Aorta (tissue), 5 donors: ENCODE measurements at regions of chr2 and their contacts with region 1.

Region 1: GRCh38 chr2:110755491-110756078 is 23.2 kb downstream of the ACOXL start:
- DNase-seq: no peak
- ATAC-seq: no peak
- H3K4me3 ChIP-seq: no peak overlapping the region
- H3K27ac ChIP-seq: no peak overlapping the region
- H3K4me1 ChIP-seq: no peaks in the 10 kb centered on the region
- H3K27me3 ChIP-seq: no peaks in the 10 kb centered on the region

Region 2: GRCh38 chr2:110662560-110662959 is 93.0 kb before region 1 on chr2:
- intact Hi-C with region 1: loop called in 1 of 2 experiments (anchors 5 kb)
- DNase-seq: no peak
- ATAC-seq: no peak
- H3K4me3 ChIP-seq: no peak overlapping the region
- H3K27ac ChIP-seq: no peak overlapping the region
- H3K4me1 ChIP-seq: no peaks in the 10 kb centered on the region
- H3K27me3 ChIP-seq: no peaks in the 10 kb centered on the region

Region 3: DNA sequence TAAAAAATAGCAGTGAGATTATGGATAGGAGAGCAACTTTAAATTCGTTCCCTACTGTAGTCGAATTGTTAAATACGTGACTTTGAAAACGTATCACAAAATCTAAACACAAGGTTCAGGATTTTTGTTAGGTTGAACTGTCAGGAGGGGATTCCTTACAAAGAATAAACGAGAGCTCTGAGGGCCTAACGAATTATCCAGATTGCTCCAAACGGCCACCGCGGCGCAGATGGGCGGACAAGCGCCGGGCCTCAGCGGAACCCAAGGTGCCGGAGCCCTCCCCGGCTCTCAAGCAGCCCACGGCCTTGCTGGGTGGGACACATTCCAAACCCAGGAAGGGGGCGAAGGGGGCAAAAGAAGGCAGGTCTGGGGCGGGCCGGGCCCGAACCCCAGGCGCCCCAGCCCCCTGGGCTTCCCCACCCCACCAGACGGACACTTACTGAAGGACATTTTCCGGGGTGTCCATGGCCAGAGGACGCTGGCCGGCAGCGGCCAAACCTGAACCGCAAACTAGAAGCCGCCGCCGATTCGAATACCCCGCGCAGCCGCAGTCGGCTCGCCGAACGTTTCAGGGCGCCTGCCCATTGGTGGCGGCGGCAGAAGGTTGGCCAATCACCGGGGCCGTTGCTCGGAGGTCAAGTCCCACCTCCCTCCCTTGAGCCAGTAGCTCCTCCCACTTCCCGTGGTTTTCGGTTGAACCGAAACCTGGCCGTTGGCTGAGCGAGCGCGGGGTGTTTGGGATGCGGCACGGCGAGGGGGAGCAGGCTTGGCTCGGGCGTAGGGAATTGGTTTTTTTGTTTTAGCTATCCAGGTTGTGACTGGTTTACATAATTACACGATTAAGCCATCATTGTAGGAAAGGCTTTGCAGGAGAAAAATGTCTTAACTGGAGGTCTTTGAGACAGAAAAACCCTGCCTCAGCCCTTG is 77.8 kb before region 1 on chr2 and contains the start of gene BUB1:
- intact Hi-C with region 1: loop called (anchors 2 to 5 kb)
- DNase-seq: peak; percentile 99
- ATAC-seq: peak; percentile 99
- H3K4me3 ChIP-seq: peak within 1 kb of the TSS; percentile 75 to 83
- H3K27ac ChIP-seq: peak within 1 kb of the TSS; percentile 54 to 79
- H3K4me1 ChIP-seq: no peaks in the 10 kb centered on the region
- H3K27me3 ChIP-seq: no peaks in the 10 kb centered on the region
- total RNA-seq, gene BUB1: 0.84 to 2.5 TPM

Region 4: DNA sequence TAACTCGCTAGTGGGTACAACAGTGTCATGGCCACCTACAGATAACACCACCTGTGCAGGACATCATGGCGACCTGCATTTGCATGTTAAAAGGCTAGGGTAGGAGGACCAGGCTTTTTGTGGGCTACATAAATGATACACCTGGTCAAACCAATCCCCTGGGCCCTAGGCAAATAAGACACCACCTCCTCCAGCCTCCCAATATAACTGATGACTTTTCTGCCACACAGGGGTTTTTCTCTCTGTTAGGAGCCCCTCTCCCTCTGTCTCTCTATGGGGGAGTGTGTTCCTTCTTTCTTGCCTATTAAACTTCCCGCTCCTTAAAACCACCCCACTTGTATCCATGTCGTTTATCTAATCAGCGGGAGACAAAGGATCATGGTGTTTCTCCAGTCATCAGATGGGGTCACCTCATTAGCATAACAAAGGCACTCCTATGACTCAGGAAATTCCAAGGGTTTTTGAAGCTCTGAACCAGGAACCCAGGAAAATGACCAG is 66.9 kb before region 1 on chr2:
- intact Hi-C with region 1: no loop called
- DNase-seq: no peak
- ATAC-seq: no peak
- H3K4me3 ChIP-seq: no peak overlapping the region
- H3K27ac ChIP-seq: no peak overlapping the region
- H3K4me1 ChIP-seq: no peaks in the 10 kb centered on the region
- H3K27me3 ChIP-seq: no peaks in the 10 kb centered on the region